Naive thymus-derived CD4-positive, alpha-beta T cell (primary cell): ENCODE measurements at regions of chr6 and their contacts with region 1.

Region 1: DNA sequence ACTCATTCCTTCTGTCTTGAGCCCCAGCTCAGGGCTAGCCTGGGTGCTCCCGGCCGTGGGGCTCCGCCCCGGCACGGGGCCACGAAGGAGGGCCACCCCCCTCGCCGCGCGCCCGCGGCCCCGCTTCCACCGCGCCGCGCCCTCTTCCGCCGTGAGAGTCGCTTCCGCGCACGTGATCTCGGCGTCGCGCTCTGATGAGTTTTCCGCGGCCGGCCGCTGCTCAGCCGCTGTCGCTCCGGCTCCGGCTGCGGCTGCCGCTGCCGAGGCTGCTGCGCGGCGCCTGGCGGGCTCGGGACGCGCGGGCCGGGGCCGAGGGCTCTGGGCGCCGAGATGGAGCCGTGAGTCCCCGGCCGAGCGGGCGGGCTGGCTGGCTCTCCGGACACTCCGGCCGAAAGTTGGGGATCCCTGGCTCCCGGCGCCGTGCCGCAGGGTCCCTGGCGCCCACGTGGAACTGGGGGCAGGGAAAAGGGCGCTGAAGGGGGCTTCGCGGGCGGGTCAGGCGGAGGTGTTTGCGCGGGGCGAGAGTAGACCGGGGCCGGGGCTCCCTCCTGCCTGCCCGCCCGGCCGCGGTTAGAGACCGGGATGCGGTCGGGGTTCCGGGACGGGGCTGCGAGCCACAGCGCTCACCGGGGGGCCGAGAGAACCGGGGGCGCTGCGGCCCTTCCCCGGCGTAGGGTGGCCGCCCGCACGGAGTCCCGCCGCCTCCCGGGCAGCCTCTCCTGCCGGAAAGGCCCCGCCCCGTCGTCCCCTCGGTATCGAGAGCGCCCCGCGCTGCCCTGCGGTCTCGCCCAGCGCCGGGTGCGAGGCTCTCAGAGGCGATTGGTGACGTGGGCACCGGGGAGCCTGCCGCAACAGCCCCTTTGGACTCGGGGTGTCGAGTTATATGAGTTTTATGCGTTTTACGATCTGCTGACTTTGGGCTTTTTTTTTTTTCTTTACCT is at the start of gene TMEM181:
- DNase-seq: peak; percentile 73 to 87 (median 86)
- ATAC-seq: peak; percentile 96
- H3K4me3 ChIP-seq: peak within 1 kb of the TSS; percentile 76
- H3K4me3 Mint-ChIP-seq: peak within 1 kb of the TSS; percentile 90 to 98 (median 94)
- H3K27ac ChIP-seq: peak within 1 kb of the TSS; percentile 94
- H3K27ac Mint-ChIP-seq: peak within 1 kb of the TSS; percentile 93 to 97 (median 94)
- H3K4me1 ChIP-seq: peaks cover 30 to 38% of the 10 kb centered on the region in 2 donors
- H3K4me1 Mint-ChIP-seq: peaks cover 26 to 46% (median 44%) of the 10 kb centered on the region in 7 donors
- H3K27me3 ChIP-seq: no peaks in the 10 kb centered on the region
- H3K27me3 Mint-ChIP-seq: peaks cover 0 to 17% (median 0%) of the 10 kb centered on the region in 5 donors
- total RNA-seq, gene TMEM181: 14.9 to 17.2 (median 16.5) TPM

Region 2: GRCh38 chr6:158168040-158168289 is 392.2 kb before region 1 on chr6 and contains the start of gene SERAC1:
- CTCF ChIA-PET with region 1: no interaction called
- POLR2A ChIA-PET with region 1: no interaction called
- intact Hi-C with region 1: loop called (anchors 1 to 5 kb)
- DNase-seq: no peak
- ATAC-seq: peak; percentile 59
- H3K4me3 ChIP-seq: peak within 1 kb of the TSS; percentile 88
- H3K4me3 Mint-ChIP-seq: peak within 1 kb of the TSS; percentile 81 to 96 (median 96)
- H3K27ac ChIP-seq: peak within 1 kb of the TSS; percentile 96
- H3K27ac Mint-ChIP-seq: peak within 1 kb of the TSS; percentile 90 to 99 (median 98)
- H3K4me1 ChIP-seq: peaks cover 0 to 5% of the 10 kb centered on the region in 2 donors
- H3K4me1 Mint-ChIP-seq: peaks cover 14 to 46% (median 27%) of the 10 kb centered on the region in 7 donors
- H3K27me3 ChIP-seq: no peaks in the 10 kb centered on the region
- H3K27me3 Mint-ChIP-seq: no peaks in the 10 kb centered on the region
- total RNA-seq, gene SERAC1: 2.4 to 5.4 (median 4.6) TPM

Region 3: DNA sequence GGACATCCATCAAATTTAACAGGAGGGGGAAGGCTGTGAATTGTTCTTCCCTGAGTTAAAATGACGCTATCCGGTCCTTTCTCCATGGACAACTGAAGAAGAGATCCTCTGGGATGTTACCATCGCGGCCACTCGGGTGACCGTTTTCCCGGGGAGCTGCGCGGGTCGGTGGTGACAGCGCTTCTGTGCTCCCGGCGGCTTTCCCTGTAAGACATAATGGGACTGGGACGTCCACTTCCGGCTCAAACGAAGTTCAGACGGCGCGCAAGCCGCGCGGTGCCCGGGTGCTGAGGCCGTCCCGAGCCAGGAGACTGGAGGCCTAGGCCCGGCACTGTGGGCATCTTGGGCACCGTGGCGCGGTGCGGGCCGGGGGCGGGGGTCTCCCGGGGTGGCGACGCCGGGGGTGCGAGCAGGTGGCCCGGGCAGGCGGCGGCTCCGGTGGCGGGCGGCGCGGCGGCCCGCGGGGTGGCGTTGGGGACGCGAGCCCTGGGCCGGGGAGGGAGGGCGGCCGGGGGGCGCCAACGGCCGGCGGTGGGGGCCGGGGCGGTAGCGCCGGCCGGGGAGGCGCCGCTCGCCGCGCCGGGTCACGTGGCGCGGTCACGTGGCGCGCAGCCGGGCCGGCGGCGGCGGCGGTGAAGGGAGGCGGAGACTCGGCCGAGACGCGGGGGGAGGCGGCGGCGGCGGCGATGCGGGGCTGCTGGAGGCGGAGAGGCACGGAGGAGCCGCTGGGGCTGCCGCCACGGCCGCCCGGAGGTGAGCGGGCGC is 328.4 kb before region 1 on chr6:
- CTCF ChIA-PET with region 1: no interaction called
- POLR2A ChIA-PET with region 1: interaction called, 3 read pairs
- intact Hi-C with region 1: loop called (anchors 1 to 2 kb)
- DNase-seq: peak; percentile 57 to 84 (median 71)
- ATAC-seq: peak; percentile 86
- H3K4me3 ChIP-seq: peak overlapping the region; percentile 62
- H3K4me3 Mint-ChIP-seq: peak overlapping the region; percentile 85 to 96 (median 92)
- H3K27ac ChIP-seq: peak overlapping the region; percentile 77
- H3K27ac Mint-ChIP-seq: peak overlapping the region; percentile 86 to 94 (median 89)
- H3K4me1 ChIP-seq: peaks cover 6 to 18% of the 10 kb centered on the region in 2 donors
- H3K4me1 Mint-ChIP-seq: peaks cover 22 to 44% (median 38%) of the 10 kb centered on the region in 7 donors
- H3K27me3 ChIP-seq: no peaks in the 10 kb centered on the region
- H3K27me3 Mint-ChIP-seq: peaks cover 0 to 14% (median 0%) of the 10 kb centered on the region in 5 donors

Region 4: DNA sequence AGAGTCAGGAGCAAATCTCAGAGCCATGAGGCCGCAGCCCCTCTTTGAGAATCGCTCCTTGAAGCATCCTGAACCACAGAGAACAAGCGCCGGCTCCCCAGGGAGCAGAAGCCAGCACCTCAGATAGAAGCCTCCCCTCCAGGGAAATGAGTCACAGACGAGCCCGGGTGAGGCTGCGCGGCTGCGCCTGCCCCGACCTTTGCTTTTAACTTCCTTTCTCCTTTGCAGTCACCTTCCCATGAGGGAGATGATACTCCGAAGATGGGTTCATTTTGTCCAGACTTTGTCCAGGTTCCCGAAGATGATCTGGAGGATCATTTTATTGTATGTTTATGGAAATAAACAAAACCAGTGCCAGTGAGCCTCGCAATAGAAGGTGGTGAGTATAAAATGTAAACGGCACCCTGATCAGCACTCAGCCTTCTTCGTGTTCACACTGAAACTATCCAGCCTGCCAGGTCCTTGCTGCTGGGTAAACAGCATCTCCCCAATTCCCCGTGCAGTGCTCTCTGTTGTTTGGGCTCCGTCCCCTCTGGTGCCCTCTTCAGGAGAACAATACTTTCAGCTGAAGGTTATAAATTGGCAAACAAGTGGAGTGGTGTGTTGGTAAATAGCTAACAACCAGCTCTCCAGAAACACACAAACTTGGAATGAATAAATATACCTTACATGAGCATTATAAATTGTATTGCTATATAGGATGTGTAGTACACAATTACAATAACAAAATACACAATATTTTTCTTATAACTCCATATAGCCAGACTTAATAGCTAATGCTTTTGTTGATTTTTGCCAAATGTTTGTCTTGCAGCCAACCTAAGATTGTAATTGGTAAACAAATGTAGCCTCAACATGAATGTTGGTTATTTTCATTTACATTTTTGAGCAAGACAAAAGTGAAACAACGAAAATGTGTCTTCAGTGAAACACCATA is 41.7 kb before region 1 on chr6:
- CTCF ChIA-PET with region 1: no interaction called
- POLR2A ChIA-PET with region 1: no interaction called
- intact Hi-C with region 1: loop called (anchors 2 to 5 kb)
- DNase-seq: peak in 7 of 9 donors; percentile 34 to 56 (median 38)
- ATAC-seq: peak; percentile 86
- H3K4me3 ChIP-seq: peak overlapping the region; percentile 31
- H3K4me3 Mint-ChIP-seq: peak overlapping the region; percentile 63 to 92 (median 82)
- H3K27ac ChIP-seq: no peak overlapping the region
- H3K27ac Mint-ChIP-seq: peak overlapping the region in 6 of 9 donors; percentile 18 to 86 (median 28)
- H3K4me1 ChIP-seq: peaks cover 16 to 17% of the 10 kb centered on the region in 2 donors
- H3K4me1 Mint-ChIP-seq: peaks cover 23 to 43% (median 38%) of the 10 kb centered on the region in 7 donors
- H3K27me3 ChIP-seq: no peaks in the 10 kb centered on the region
- H3K27me3 Mint-ChIP-seq: peaks cover 3 to 26% (median 23%) of the 10 kb centered on the region in 5 donors

Region 5: GRCh38 chr6:158545043-158545966 is 14.9 kb before region 1 on chr6:
- CTCF ChIA-PET with region 1: no interaction called
- POLR2A ChIA-PET with region 1: no interaction called
- intact Hi-C with region 1: no loop called
- DNase-seq: no peak
- ATAC-seq: no peak
- H3K4me3 ChIP-seq: no peak overlapping the region
- H3K4me3 Mint-ChIP-seq: no peak overlapping the region
- H3K27ac ChIP-seq: no peak overlapping the region
- H3K27ac Mint-ChIP-seq: no peak overlapping the region
- H3K4me1 ChIP-seq: no peaks in the 10 kb centered on the region
- H3K4me1 Mint-ChIP-seq: no peaks in the 10 kb centered on the region
- H3K27me3 ChIP-seq: no peaks in the 10 kb centered on the region
- H3K27me3 Mint-ChIP-seq: peaks cover 0 to 19% (median 11%) of the 10 kb centered on the region in 5 donors

Region 6: DNA sequence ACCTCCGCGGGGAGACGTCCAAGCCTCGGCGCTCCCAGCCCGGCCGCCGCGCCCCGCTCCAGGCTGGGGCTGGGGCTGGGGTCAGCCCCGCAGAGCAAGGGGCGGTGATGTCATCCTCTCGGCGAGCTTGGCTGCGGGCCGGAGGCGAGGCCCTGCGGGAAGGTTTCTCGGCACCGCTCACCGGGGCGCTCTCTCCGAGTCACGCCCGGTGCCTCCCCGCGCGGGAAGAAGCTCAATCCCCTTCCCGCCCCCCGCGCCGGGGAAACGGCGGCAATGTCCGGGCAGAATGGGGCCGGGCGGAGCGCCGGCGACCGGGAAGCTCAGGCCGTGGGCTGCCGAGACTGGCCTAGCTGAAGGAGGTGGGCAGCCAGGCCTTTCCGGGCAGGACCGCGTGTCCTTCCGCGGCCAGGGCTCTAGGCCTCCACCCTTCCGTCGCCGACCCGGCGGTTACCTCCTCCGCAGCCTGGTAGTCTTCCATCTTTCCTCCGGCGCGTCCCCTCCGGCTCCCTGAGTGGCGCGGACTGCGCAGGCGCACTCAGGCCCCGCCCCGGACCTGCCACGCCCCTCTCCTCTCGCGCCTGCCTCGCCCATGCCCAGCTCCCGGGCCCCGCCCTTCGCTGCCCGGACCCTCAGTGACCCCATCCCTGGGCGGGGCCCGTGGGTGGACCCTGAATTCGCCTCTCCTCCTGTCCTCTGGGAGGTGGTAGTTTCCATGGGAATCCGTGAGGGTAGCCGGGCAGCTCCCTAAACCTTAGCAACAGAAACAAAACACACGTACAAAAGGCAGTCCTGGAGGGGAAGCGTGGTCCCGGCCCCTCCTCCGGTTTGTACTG is 84.3 kb after region 1 on chr6 and contains the start of gene DYNLT1:
- CTCF ChIA-PET with region 1: no interaction called
- POLR2A ChIA-PET with region 1: no interaction called
- intact Hi-C with region 1: loop called (anchors 1 kb)
- DNase-seq: peak; percentile 72 to 99 (median 87)
- ATAC-seq: peak; percentile 88
- H3K4me3 ChIP-seq: peak within 1 kb of the TSS; percentile 81
- H3K4me3 Mint-ChIP-seq: peak within 1 kb of the TSS; percentile 92 to 100 (median 99)
- H3K27ac ChIP-seq: peak within 1 kb of the TSS; percentile 97
- H3K27ac Mint-ChIP-seq: peak within 1 kb of the TSS; percentile 88 to 100 (median 98)
- H3K4me1 ChIP-seq: peaks cover 35 to 45% of the 10 kb centered on the region in 2 donors
- H3K4me1 Mint-ChIP-seq: peaks cover 47 to 72% (median 67%) of the 10 kb centered on the region in 7 donors
- H3K27me3 ChIP-seq: no peaks in the 10 kb centered on the region
- H3K27me3 Mint-ChIP-seq: no peaks in the 10 kb centered on the region
- total RNA-seq, gene DYNLT1: 66.4 to 122 (median 75.9) TPM